MCF 10A (cell line): ENCODE measurements at regions of chr1 and their contacts with region 1.

Region 1: GRCh38 chr1:89762779-89763648 is 57.8 kb upstream of the LRRC8D start:
- DNase-seq: peak; percentile 78
- H3K4me3 Mint-ChIP-seq: peak overlapping the region; percentile 71
- H3K27ac Mint-ChIP-seq: no peak overlapping the region
- H3K4me1 Mint-ChIP-seq: no peaks in the 10 kb centered on the region
- H3K27me3 Mint-ChIP-seq: no peaks in the 10 kb centered on the region
- CTCF ChIP-seq: peak; percentile 94

Region 2: DNA sequence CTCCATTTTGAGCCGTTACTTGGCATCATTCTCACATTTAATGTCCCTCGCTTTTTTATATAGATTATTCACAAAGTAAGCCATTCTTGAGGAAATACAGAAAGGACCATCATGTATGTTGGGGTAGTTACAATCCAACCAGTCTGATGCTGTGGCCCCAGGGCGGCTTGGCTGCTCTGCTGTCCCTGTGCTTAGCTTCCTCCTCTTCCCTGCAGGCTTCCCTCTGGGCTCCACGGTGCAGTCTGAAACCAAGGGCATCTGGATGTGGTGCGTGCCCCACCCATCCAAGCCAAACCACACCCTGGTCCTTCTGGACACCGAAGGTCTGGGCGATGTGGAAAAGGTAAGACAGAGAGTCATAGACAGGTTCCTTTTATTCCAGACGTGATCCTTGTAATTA is 393.7 kb before region 1 on chr1:
- CTCF ChIA-PET with region 1: no interaction called
- POLR2A ChIA-PET with region 1: no interaction called
- intact Hi-C with region 1: no loop called
- DNase-seq: no peak
- H3K4me3 Mint-ChIP-seq: no peak overlapping the region
- H3K27ac Mint-ChIP-seq: no peak overlapping the region
- H3K4me1 Mint-ChIP-seq: no peaks in the 10 kb centered on the region
- H3K27me3 Mint-ChIP-seq: no peaks in the 10 kb centered on the region
- CTCF ChIP-seq: no peak

Region 3: DNA sequence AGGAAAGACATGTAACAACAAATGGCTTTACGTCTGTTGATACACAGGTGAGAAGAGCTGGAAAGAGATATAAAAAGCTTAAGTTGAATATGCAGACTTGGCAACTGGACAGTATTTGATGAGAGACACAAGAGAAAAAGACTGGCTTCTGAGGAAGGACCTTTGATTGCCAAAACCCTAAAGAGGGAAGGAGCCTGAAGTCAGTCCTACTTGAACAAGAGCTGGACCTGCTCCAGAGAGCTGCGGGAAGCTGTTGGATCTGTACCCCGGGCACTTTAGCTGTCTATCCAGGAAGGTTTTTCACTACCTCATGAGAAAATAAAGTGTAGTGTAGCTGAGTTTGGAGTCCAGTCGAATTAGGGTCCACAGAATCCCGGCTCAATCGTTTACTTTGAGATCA is 263.7 kb before region 1 on chr1:
- CTCF ChIA-PET with region 1: interaction called, 10 read pairs
- POLR2A ChIA-PET with region 1: interaction called, 3 read pairs
- intact Hi-C with region 1: no loop called
- DNase-seq: no peak
- H3K4me3 Mint-ChIP-seq: no peak overlapping the region
- H3K27ac Mint-ChIP-seq: no peak overlapping the region
- H3K4me1 Mint-ChIP-seq: peaks cover 5% of the 10 kb centered on the region
- H3K27me3 Mint-ChIP-seq: no peaks in the 10 kb centered on the region
- CTCF ChIP-seq: no peak

Region 4: DNA sequence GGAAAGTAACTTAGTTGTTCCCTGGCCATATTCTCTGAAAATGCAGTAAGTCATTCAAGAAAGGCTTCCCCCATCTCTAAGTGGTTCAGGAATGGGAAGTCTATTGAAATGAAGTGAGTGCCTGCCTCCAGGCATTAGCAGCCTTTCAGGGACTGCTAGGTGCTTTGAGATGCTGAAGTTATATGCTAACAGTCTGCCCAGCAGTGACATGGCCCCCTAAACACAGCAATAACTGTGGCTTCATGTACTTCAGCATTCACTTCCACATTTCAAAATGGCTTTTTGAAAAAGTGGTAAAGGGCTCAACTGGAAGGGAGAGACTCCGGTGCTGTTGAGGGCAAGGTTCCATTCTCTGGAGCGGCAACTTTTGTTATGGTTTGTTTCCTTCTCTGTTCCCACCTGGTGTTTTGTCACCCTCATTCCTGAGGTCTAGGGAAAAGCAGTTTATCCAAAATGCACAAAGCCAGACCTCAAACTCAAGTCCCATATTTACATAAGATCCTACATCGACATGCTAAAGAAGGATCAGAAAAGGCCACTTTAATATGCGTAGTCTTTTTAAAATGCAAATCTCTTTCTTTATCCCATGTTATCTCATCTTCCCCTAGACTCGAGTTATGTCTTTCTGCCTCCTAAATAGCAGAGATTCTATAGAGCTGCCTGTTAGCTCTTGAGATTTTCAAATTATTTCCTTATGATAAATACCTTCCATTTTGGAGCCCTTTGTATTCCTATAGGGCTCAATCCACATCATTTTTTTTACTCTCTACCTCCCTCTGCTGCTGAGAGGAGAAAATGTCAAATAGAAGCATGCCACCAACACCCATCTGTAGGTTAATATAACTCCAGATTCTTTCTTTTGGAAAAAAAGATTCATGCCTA is 164.3 kb before region 1 on chr1:
- CTCF ChIA-PET with region 1: interaction called, 42 read pairs
- POLR2A ChIA-PET with region 1: interaction called, 3 read pairs
- intact Hi-C with region 1: loop called (anchors 1 kb)
- DNase-seq: peak; percentile 61
- H3K4me3 Mint-ChIP-seq: no peak overlapping the region
- H3K27ac Mint-ChIP-seq: no peak overlapping the region
- H3K4me1 Mint-ChIP-seq: peaks cover 21% of the 10 kb centered on the region
- H3K27me3 Mint-ChIP-seq: no peaks in the 10 kb centered on the region
- CTCF ChIP-seq: peak; percentile 53

Region 5: DNA sequence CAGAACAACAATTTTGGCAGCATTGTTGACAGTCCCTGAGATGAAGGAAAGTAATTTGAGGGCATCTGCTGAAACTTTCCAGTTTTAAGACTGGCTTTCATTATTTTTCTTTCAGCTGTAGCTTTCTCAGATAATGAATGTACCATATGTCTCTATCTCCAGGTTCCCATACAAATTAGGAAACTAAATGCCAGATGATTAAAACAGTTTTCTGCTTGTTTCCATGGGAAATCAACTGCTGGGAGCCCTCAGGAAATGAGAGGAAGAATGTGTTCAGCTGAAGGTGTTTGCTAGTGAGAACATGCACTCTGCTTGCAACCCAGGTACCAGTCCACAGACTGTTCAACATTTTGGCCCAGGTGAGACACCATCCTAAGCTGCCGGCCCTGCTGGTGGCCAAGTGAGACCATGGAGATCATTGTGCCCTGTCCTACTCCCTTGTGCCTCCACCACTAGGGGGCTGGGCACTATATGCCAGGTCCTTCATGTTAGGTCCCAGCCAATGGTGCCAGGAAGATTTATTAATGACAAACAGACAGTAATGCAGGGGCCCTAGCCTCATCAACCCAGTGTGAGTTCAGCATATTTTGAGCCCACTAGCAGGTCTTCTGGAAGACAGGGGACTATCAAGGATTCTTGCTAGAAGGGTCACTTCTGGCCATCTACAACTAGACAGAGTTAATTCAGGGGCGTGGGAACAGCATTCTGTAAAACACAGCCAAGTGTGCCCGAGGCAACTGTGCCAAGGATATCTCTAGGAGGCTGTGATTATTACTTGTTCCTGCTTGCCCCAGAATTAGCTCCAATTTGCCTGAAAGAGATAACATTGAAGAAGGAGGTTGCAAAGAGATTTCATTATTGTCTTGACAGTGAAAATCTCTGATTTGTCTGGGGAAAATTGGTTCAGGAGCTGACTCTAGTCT is 147.1 kb before region 1 on chr1:
- CTCF ChIA-PET with region 1: interaction called, 32 read pairs
- POLR2A ChIA-PET with region 1: no interaction called
- intact Hi-C with region 1: no loop called
- DNase-seq: peak; percentile 44
- H3K4me3 Mint-ChIP-seq: no peak overlapping the region
- H3K27ac Mint-ChIP-seq: peak overlapping the region; percentile 66
- H3K4me1 Mint-ChIP-seq: peaks cover 15% of the 10 kb centered on the region
- H3K27me3 Mint-ChIP-seq: no peaks in the 10 kb centered on the region
- CTCF ChIP-seq: peak; percentile 17

Region 6: DNA sequence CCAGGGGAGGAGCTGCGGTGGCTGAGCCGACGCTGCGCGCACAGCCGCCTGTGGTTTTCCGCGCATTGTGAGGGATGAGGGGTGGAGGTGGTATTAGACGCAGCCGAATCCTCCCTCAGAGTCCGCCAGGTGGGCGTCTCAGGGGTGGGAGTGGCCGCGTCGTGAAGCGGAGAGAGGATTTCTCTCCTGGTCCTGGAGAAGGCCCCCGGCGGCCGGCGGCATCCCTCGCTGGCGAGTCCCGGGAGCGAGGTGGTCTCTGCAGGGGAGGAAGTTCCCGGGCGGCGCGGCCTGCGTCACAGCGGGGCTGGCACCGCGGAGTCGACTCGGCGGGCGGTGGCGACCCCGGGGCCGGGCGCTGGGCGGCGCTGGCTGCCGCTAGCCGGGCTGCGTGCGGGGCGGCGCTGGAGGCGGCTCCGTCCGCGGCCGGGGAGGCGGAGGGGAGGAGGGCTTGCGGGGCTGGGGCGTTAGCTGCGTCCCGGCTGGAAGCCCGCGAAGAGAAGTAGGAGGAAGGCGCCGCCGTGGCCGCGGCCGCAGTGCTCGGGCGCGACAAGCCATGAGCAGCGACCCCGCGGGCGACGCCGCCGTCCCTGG is 130.3 kb before region 1 on chr1 and contains the start of gene LRRC8C:
- CTCF ChIA-PET with region 1: interaction called, 93 read pairs
- POLR2A ChIA-PET with region 1: interaction called, 5 read pairs
- intact Hi-C with region 1: loop called (anchors 1 kb)
- DNase-seq: peak; percentile 59
- H3K4me3 Mint-ChIP-seq: peak within 1 kb of the TSS; percentile 85
- H3K27ac Mint-ChIP-seq: peak within 1 kb of the TSS; percentile 57
- H3K4me1 Mint-ChIP-seq: peaks cover 18% of the 10 kb centered on the region
- H3K27me3 Mint-ChIP-seq: no peaks in the 10 kb centered on the region
- CTCF ChIP-seq: peak; percentile 40
- total RNA-seq, gene LRRC8C: 4.4 TPM in 2 replicates